ENCODE measurements at regions of chr16 and their contacts with region 1.

Region 1: DNA sequence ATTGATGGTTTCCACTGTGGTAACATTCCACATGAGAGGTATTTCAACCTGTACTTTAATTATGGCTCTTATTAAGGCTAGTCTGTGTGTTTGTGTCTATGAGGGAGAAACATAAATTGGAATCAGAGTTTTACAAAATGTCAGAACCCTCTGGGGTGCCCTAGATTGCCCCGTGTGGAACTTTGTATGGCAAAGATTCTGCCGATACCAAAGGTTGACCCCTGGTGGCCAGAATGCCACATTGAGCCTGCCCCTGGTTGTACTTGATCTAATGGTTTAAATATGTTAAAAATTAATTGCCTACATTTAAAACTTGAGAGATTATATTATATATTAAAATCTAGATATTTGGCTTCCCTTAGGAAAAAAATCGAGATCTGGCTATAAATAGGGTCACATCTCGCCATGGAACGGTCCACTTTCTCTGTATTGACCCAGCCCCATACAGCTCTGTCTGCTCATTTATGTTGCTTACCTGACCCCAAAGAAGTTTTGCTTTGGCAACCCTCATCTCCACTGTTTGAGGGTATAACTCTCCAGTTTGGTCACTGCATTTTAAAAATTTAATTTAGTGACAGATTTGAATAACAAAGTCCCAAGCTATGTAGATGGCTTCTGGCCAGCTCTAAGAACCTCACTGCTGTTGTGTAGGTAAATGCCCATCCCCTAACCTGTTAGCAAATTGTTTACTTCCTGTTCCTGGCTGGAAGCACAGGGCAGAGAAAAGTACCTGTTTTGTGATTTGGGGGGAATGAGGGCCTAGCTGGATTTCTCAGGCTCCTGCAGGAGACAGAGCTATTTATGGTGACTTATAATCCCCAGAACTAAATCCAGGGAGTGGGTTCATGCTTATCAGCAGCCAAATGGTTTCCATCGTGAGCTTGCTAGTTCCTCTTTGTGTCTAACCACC is 95.0 kb downstream of the PLCG2 start:
- DNase-seq: peak; percentile 59 to 72
- ATAC-seq: peak; percentile 91 to 97
- H3K4me3 ChIP-seq: no peak overlapping the region
- H3K27ac ChIP-seq: no peak overlapping the region
- H3K4me1 ChIP-seq: no peaks in the 10 kb centered on the region
- CTCF ChIP-seq: peak; percentile 84
- EP300 ChIP-seq: no peak
- POLR2A ChIP-seq: no peak
- RAD21 ChIP-seq: peak; percentile 66 to 70

Region 2: DNA sequence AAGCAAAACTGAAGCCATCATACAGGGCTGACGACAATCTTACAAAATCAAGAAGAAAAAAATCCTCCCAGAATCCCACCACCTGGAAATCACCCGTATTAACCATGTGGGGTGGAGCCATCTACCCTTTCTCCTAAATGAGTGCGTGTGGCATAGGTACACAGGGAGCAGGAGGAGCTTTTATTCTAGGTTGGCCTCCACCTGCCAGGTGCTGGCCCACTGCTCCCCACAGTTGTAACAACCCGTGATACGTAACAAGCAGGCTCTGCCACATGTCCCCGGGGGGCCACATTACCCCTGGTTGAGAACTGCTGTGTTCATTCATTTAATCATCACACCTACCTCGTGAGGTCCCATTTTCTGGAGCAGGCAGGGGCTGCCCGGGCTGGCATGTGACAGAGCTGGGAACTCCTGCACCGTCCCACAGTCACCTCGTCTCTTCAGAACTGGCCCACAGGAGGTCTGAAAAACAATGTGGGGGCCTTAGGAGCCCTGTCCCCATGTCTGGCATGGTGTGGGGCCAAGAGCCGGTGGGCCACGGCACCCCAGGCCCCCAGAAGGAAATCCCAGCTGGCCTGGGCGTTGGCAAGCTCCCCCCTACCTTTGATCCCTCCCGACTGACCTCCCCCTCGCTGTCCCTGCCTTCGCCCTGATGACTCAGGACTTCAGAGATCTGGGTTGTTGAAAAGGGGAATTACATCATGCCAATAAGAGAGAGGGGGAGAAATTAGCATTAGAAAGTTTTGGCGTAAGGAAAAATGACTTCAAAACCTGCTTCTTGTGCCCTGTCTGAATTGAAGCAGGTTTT is 416.6 kb before region 1 on chr16:
- CTCF ChIA-PET with region 1: no interaction called
- POLR2A ChIA-PET with region 1: no interaction called
- DNase-seq: peak; percentile 75 to 95
- ATAC-seq: peak; percentile 61 to 75
- H3K4me3 ChIP-seq: peak overlapping the region; percentile 17; the same call in 1 of the 3 replicates
- H3K27ac ChIP-seq: peak overlapping the region; percentile 84 to 99
- H3K4me1 ChIP-seq: peaks cover 100% of the 10 kb centered on the region
- CTCF ChIP-seq: no peak
- EP300 ChIP-seq: peak; percentile 9 to 63; a peak in 3 of 5 replicates
- POLR2A ChIP-seq: no peak
- RAD21 ChIP-seq: no peak; a peak in 1 of 5 replicates

Region 3: DNA sequence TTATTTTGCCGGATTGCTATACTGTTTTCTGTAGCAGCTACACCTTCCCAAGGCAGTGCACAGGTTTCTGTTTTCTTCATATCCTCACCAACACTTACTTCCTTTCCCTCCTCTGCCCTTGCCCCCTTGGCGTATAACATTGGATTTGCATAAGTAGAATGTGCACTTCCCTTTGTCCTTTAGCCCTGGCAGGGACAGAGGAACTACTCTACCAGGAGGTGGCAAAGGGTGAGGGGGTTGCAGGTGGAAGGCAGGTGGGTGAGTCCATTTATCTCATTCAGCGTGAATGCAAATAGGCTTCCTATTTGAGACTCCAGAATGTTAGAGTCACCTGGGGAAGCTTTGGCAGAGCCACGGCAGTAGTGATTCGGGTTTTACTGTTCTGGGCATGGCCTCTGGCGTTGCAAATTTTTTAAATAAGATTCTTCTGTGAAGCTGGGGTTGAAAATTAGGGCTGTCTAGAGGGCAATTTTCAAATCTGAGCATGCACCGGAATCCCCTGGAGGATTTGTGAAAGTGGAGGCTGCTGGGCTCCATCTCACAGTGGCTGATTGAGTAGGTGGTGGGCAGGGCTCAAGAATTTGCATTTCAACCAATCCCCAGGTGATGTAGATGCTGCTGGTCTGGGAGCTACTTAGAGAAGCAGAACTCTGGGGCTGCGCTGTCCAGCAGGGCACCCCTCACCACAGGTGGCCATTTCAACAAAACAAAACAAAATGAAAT is 10.3 kb before region 1 on chr16:
- CTCF ChIA-PET with region 1: interaction called, 14 read pairs
- POLR2A ChIA-PET with region 1: no interaction called
- DNase-seq: no peak
- ATAC-seq: no peak
- H3K4me3 ChIP-seq: no peak overlapping the region
- H3K27ac ChIP-seq: no peak overlapping the region
- H3K4me1 ChIP-seq: no peaks in the 10 kb centered on the region
- CTCF ChIP-seq: no peak
- EP300 ChIP-seq: no peak
- POLR2A ChIP-seq: no peak
- RAD21 ChIP-seq: no peak

Region 4: GRCh38 chr16:81928975-81929374 is 54.9 kb after region 1 on chr16:
- CTCF ChIA-PET with region 1: no interaction called
- POLR2A ChIA-PET with region 1: no interaction called
- DNase-seq: no peak
- ATAC-seq: 0 out of 6 replicates have a peak, but pooled peaks of 1 of the 2 experiments have one; percentile 36
- H3K4me3 ChIP-seq: no peak overlapping the region
- H3K27ac ChIP-seq: no peak overlapping the region
- H3K4me1 ChIP-seq: no peaks in the 10 kb centered on the region
- CTCF ChIP-seq: no peak
- EP300 ChIP-seq: no peak
- POLR2A ChIP-seq: no peak
- RAD21 ChIP-seq: no peak

Measured in A549 (cell line).